ENCODE measurements at regions of chr2 and their contacts with region 1.

Region 1: GRCh38 chr2:64488050-64488974 is 34.4 kb downstream of the LGALSL start:
- DNase-seq: peak; percentile 72
- ATAC-seq: peak; percentile 73

Region 2: GRCh38 chr2:64040161-64040560 is 448.2 kb before region 1 on chr2:
- intact Hi-C with region 1: loop called (anchors 10 kb)
- DNase-seq: no peak
- ATAC-seq: no peak

Region 3: GRCh38 chr2:64080179-64080578 is 408.1 kb before region 1 on chr2:
- intact Hi-C with region 1: no loop called
- DNase-seq: no peak
- ATAC-seq: no peak

Measured in Right ventricle myocardium superior (tissue), 1 donor.